ENCODE measurements at regions of chr14 and their contacts with region 1.

Region 1: GRCh38 chr14:20652996-20653975 is 11.8 kb upstream of the OR6S1 start:
- DNase-seq: peak; percentile 66

Region 2: DNA sequence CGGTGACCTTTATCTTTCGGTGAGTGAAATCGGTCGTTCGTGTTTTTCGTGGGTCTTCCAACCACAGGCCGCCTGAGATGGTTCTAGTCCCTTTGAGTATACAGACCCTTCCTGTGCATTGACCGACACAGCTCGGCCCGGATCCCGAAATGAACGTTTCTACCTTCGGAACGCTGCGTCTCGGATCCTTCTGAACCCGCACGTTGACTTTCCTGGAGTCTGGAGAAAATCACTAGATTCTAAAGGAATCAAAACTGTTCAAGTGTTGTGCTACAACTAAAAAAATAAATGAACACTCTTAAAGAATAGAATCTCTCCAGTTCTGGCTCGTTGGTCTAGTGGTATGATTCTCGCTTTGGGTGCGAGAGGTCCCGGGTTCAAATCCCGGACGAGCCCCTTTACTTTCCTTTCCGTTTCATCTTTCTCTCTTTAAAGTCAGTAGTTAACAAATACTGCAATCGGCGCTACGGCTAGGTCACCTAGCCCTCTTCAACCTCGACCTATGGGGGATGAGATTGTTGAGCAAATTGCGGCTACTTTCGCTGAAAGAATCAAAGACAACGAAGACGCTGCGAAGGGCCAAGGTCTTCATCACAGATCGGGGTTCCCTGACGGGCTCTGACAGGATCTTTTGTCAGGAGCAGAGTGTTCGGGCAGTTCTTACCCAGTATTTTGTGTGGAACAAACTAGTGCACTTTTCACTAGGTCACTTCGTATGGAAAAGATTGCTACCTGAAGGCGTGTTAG is 20.4 kb before region 1 on chr14:
- CTCF ChIA-PET with region 1: interaction called, 3 read pairs
- POLR2A ChIA-PET with region 1: interaction called, 14 read pairs
- DNase-seq: peak; percentile 65

Region 3: GRCh38 chr14:20671591-20672283 is 18.5 kb after region 1 on chr14:
- CTCF ChIA-PET with region 1: no interaction called
- POLR2A ChIA-PET with region 1: no interaction called
- DNase-seq: no peak

Region 4: GRCh38 chr14:20690848-20691523 is 37.7 kb after region 1 on chr14:
- CTCF ChIA-PET with region 1: interaction called, 17 read pairs
- POLR2A ChIA-PET with region 1: interaction called, 3 read pairs
- DNase-seq: peak; percentile 65